ENCODE measurements at regions of chr12 and their contacts with region 1.

Region 1: GRCh38 chr12:123150744-123151456 is at the start of gene PITPNM2:
- DNase-seq: peak; percentile 75 to 81
- ATAC-seq: peak; percentile 86 to 92 (median 89)
- H3K4me3 ChIP-seq: peak within 1 kb of the TSS; percentile 90
- H3K27ac ChIP-seq: peak within 1 kb of the TSS; percentile 72
- H3K4me1 ChIP-seq: peaks cover 7% of the 10 kb centered on the region
- H3K27me3 ChIP-seq: no peaks in the 10 kb centered on the region
- CTCF ChIP-seq: peak; percentile 49
- total RNA-seq, gene PITPNM2: 4.6 to 7.4 (median 5.8) TPM

Region 2: GRCh38 chr12:122980183-122981046 is 170.5 kb before region 1 on chr12 and contains the start of gene ARL6IP4:
- intact Hi-C with region 1: loop called in 1 of 2 experiments (anchors 5 kb)
- DNase-seq: peak; percentile 69 to 81
- ATAC-seq: peak; percentile 68 to 85 (median 82)
- H3K4me3 ChIP-seq: peak within 1 kb of the TSS; percentile 99
- H3K27ac ChIP-seq: peak within 1 kb of the TSS; percentile 89
- H3K4me1 ChIP-seq: peaks cover 66% of the 10 kb centered on the region
- H3K27me3 ChIP-seq: no peaks in the 10 kb centered on the region
- CTCF ChIP-seq: no peak
- total RNA-seq, gene ARL6IP4: 113 to 130 (median 117) TPM

Region 3: GRCh38 chr12:123043536-123044001 is 107.3 kb before region 1 on chr12:
- intact Hi-C with region 1: loop called (anchors 1 to 2 kb)
- DNase-seq: peak; percentile 82 to 93
- ATAC-seq: peak; percentile 93 to 100 (median 99)
- H3K4me3 ChIP-seq: no peak overlapping the region
- H3K27ac ChIP-seq: no peak overlapping the region
- H3K4me1 ChIP-seq: peaks cover 25% of the 10 kb centered on the region
- H3K27me3 ChIP-seq: no peaks in the 10 kb centered on the region
- CTCF ChIP-seq: peak; percentile 72

Region 4: GRCh38 chr12:123050331-123050831 is 100.5 kb before region 1 on chr12:
- intact Hi-C with region 1: loop called in 1 of 2 experiments (anchors 2 kb)
- DNase-seq: peak in 1 of 2 donors; percentile 68
- ATAC-seq: peak; percentile 94 to 97 (median 95)
- H3K4me3 ChIP-seq: no peak overlapping the region
- H3K27ac ChIP-seq: peak overlapping the region; percentile 79
- H3K4me1 ChIP-seq: peaks cover 37% of the 10 kb centered on the region
- H3K27me3 ChIP-seq: no peaks in the 10 kb centered on the region
- CTCF ChIP-seq: no peak

Region 5: DNA sequence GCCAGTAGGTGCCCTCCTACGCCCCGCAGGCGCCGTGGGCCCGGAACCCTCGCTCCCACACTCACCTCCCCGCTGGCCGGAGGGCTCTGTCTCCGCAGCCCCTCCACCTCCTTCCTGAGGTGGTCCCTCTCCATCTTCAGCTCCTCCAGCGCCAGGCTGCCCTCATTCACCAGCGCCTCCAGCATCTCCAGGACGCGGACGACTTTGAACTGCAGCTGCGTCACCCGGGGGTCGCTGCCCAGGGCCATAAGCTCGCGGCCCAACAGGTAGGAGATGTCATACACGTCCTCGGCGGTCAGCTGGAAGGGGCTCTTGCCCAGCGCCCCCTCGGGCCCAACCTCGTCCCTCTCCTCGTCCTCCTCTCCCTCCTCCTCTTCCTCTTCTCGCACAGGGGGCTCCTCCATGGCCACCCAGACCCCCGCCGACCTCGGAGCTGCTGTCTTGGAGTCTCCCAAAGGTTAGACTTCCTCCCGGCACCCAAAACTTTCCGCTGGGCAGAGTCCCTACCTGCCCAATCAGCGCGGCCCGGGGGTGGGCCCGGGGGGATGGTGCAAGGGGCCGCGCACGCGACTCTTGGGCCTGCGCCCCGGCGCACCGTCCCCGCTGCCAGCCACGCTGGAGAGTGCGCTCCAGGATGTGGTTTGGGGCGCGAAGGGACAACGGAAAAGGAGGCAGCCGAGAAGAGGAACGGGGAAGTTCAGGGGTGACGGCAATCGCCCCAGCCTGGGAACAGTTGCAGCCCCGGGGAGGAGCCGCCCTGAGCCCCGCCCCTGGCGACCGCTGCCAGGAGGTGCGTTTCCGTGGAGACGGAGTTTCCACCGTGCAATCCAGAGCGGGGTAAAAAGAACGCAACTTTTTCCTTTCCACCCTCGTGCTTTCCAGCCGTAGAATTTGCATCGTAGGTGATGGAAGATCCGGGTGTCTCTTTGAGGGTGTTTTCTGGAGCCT is 285.4 kb after region 1 on chr12 and contains the start of gene RILPL2:
- intact Hi-C with region 1: no loop called
- DNase-seq: peak; percentile 89 to 94
- ATAC-seq: peak; percentile 91 to 97 (median 94)
- H3K4me3 ChIP-seq: peak within 1 kb of the TSS; percentile 84
- H3K27ac ChIP-seq: peak within 1 kb of the TSS; percentile 68
- H3K4me1 ChIP-seq: no peaks in the 10 kb centered on the region
- H3K27me3 ChIP-seq: no peaks in the 10 kb centered on the region
- CTCF ChIP-seq: no peak
- total RNA-seq, gene RILPL2: 0.69 to 1.2 (median 1.1) TPM